Lower leg skin (tissue), 4 donors: ENCODE measurements at regions of chr16 and their contacts with region 1.

Region 1: DNA sequence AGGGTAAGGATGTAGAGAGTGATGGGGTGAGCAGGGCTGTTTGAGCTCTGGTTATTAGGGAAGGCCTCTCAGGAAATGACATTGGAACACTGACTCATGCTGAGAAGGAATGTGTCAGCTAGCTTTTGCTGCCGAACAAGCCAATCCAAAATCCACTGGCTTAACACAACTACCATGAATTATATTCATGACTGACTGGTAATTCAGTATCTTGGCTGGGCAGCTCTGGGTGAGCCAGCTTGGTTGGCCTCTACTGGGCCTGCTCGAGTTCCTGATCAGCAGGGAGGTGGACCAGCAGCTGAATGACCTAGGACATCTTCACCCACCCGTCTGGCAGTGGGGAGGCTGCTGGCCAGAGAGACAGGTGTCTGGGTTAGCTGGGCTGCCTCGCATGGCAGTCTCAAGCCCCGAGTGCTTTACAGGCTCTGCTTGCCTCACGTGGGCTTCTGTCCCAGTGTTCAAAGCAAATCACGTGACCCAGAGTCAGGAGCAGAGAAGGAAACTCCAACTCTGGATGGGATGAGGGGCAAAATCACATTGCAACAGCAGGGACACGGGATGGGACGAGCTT is 209.4 kb downstream of the KATNIP start:
- DNase-seq: no peak
- H3K4me3 ChIP-seq: no peak overlapping the region
- CTCF ChIP-seq: no peak
- POLR2A ChIP-seq: no peak

Region 2: DNA sequence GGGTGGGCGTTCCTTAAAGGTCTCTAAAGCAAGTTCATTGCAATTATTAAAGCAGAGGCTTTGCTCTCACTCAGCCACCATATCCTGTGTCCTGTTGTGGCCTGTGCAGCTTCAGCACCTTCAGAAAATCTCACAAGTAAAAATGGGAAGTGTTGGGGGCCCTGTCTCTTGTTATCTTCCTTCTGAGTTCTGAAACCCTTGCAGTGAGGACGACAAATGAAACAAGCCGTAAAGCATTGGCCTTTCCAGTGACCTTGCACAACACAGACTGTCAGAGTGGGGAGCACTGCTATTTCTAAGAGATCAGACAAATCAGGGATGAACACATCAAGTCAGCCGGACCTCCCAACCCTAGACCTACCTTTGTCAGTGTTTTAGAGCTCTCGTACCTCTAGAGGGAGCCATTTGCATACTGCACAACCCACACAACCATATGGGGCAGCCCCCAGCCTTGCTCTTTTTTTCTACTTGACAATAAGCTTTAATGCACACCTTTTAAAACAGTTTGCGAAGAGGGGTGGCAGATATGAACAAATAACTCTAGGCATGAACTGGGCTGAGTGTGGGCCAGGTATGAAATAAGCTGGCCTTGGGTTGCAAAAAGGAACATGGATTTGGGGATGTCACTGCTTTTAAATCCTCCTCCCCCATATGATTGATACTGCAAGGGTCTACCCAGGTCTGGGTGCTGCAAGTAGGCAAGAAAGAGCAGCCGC is 119.7 kb before region 1 on chr16:
- intact Hi-C with region 1: no loop called
- DNase-seq: no peak
- H3K4me3 ChIP-seq: no peak overlapping the region
- CTCF ChIP-seq: no peak
- POLR2A ChIP-seq: no peak

Region 3: DNA sequence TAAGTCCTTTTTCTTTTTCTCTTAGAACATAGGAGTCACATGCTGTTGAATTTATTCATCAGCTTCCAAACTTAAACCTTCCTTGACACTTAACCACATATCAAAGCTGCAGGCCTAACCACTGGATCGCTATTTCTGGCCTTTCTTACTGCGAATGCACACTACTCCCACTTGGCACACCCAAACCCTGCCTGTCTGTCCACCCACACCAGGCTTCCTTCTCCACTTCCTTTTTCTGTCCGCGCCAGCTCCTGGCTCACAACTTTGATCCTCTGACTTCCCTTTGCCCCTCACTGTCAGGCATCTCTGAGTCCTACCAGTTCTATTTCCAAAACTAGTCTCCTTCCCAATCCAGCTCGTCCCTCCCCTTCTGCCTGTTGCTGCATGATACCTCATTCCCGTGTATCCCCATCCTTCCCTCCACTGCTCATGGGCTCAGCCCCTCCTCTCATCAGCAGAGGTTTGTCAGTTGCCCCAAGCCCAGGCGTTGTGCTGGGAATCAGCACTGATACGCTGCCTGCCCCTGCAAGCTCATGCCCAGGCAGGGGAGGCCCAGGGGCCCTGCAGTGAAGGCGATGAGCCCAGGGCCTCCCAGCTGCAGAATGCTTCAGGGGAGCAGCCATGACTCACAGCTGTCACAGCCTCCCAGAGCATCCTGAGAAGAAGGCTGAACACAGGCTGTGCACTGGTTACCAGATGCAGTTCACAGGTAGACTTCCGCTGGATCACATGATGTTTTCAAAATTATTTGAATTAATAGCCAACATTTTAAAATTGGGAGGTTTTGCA is 29.7 kb before region 1 on chr16:
- intact Hi-C with region 1: no loop called
- DNase-seq: peak in 1 of 2 donors; percentile 44
- H3K4me3 ChIP-seq: no peak overlapping the region
- CTCF ChIP-seq: no peak
- POLR2A ChIP-seq: no peak

Region 4: GRCh38 chr16:27801289-27801945 is 42.0 kb after region 1 on chr16:
- intact Hi-C with region 1: loop called (anchors 2 kb)
- DNase-seq: no peak
- H3K4me3 ChIP-seq: no peak overlapping the region
- CTCF ChIP-seq: no peak
- POLR2A ChIP-seq: no peak